ENCODE measurements at regions of chr9 and their contacts with region 1.

Region 1: DNA sequence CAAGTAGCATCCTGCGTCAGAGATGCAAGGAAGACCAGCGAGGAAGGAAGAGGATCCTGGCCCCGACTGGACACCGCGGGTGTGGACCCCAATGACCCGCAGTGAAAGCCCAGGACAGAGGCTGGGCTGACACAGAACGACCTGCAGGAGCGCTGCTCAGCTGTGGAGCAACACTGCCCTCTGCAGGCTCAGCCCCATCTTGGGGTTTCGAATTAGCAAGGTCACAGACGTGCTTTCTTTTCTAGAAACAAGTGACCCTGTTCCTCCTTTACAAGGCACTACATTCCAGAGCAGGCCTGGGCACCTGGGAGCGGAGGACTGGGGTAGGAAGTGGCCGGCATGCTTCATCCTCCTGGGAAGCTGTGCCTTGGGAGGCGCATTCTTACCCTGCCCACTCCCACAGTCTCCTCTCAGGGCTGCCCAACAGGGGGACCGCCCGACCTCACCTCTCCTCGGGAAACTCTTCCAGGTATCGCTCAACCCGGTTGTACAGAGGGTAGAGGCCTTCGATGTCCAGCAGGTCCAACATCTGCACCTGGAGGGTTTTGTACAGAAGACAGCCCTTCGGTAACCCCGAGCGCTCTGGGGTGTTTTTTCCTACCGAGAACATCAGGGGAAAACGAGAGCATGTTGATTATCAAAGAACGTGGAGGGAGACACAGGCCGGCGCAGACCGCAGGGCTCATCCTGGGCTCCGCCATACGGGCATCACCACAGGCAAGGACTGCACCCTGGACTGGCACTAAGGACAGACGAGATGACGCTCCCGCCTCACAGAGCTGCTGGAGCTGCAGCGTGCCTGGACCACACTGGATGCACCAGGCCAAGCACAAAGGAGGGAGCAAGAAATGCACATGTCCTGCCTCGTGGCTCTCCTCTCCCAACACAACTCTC is 35.0 kb downstream of the IPPK start:
- DNase-seq: no peak
- H3K4me3 ChIP-seq: no peak overlapping the region
- CTCF ChIP-seq: peak; percentile 94

Region 2: DNA sequence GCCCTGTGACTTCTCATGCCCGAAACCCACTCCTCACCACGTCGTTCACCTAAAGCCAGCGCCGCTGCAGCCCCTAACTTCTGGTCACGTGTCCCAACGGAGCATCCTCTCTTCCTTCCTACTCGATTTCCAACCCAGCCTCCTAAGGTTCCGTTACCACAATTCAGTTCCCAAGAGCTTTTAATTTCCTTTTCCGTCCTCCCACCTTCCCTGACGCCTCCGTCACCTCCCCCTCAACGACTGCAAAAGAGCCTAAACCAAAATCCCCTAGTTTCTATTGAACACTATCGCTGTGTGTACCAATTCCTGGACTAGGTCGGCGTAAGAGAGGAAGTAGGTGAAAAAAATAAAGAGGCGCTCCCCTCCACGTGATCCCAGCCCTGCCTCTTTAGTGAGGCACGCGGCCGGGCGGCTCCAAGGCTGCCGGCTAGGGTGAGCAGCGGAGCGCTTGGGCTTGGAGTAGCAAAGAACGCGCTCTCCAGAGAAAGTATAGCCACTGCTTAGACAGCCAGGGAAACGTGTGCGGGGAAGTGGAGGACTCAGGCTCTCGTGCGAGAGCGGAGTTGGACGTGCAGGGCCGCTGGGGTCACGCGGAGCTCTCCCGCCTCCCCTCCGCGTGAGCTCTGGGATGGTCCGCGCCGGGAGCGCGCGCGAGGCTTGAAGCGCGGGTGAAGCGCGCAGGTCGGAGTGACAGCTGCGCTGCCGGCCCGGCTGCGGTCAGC is 309.5 kb before region 1 on chr9 and contains the starts of genes CENPP and NOL8:
- CTCF ChIA-PET with region 1: interaction called, 89 read pairs
- POLR2A ChIA-PET with region 1: no interaction called
- DNase-seq: peak; percentile 38
- H3K4me3 ChIP-seq: peak within 1 kb of the TSS; percentile 90
- CTCF ChIP-seq: no peak

Region 3: DNA sequence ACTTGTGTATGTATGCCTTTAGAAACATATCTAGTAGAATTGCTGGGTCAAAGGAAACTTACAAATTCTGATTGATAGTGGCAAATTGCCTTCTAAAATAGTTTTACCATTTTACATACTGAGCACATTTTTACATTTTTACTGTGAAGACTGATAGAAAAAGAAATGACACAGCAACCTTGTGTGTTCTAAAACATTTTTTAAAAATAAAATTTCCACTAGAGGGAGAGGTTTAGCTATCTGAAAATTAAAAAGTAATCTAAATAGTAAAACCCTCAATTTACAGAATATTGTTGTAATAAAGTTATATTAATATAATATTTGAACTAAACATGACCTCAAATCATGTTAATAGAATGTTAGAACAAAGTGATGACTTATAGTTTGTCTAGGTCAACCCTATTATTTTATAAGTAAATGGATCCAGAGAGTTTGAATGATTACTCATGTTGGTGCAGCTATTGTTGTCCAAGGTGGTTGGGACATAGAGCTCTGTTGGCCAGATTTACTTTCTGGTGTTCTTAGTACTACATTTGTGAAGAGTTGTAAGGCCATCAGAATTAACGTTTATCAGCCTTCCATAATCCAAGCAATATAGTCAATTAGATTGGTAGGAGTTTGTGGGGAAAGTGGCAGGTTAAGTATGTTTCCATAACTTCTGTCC is 292.0 kb before region 1 on chr9:
- CTCF ChIA-PET with region 1: interaction called, 52 read pairs
- POLR2A ChIA-PET with region 1: no interaction called
- DNase-seq: no peak
- H3K4me3 ChIP-seq: no peak overlapping the region
- CTCF ChIP-seq: no peak

Region 4: GRCh38 chr9:92463984-92464383 is 171.0 kb before region 1 on chr9:
- CTCF ChIA-PET with region 1: interaction called, 11 read pairs
- POLR2A ChIA-PET with region 1: no interaction called
- DNase-seq: peak; percentile 91
- H3K4me3 ChIP-seq: no peak overlapping the region
- CTCF ChIP-seq: no peak

Region 5: GRCh38 chr9:92535940-92536850 is 98.8 kb before region 1 on chr9 and contains the start of gene ECM2:
- CTCF ChIA-PET with region 1: no interaction called
- POLR2A ChIA-PET with region 1: no interaction called
- DNase-seq: peak; percentile 40
- H3K4me3 ChIP-seq: no peak within 1 kb of the TSS
- CTCF ChIP-seq: no peak

Region 6: GRCh38 chr9:92616655-92617111 is 18.3 kb before region 1 on chr9:
- CTCF ChIA-PET with region 1: interaction called, 10 read pairs
- POLR2A ChIA-PET with region 1: interaction called, 3 read pairs
- DNase-seq: no peak
- H3K4me3 ChIP-seq: no peak overlapping the region
- CTCF ChIP-seq: no peak

Region 7: GRCh38 chr9:92790542-92791527 is 155.9 kb after region 1 on chr9:
- CTCF ChIA-PET with region 1: interaction called, 15 read pairs
- POLR2A ChIA-PET with region 1: no interaction called
- DNase-seq: peak; percentile 16
- H3K4me3 ChIP-seq: no peak overlapping the region
- CTCF ChIP-seq: peak; percentile 76

Measured in AG04449 (cell line).